A673 (cell line): ENCODE measurements at regions of chr7 and their contacts with region 1.

Region 1: GRCh38 chr7:155796381-155797261 is 15.6 kb downstream of the SHH start:
- DNase-seq: peak; percentile 46
- H3K4me3 ChIP-seq: no peak overlapping the region
- H3K27ac ChIP-seq: no peak overlapping the region
- H3K4me1 ChIP-seq: no peaks in the 10 kb centered on the region
- H3K27me3 ChIP-seq: peaks cover 36% of the 10 kb centered on the region
- CTCF ChIP-seq: peak; percentile 76

Region 2: GRCh38 chr7:155775691-155776090 is 20.9 kb before region 1 on chr7:
- CTCF ChIA-PET with region 1: no interaction called
- POLR2A ChIA-PET with region 1: no interaction called
- intact Hi-C with region 1: no loop called
- DNase-seq: no peak
- H3K4me3 ChIP-seq: no peak overlapping the region
- H3K27ac ChIP-seq: no peak overlapping the region
- H3K4me1 ChIP-seq: no peaks in the 10 kb centered on the region
- H3K27me3 ChIP-seq: no peaks in the 10 kb centered on the region
- CTCF ChIP-seq: no peak

Region 3: GRCh38 chr7:156827587-156828203 is 1031.1 kb after region 1 on chr7:
- CTCF ChIA-PET with region 1: no interaction called
- POLR2A ChIA-PET with region 1: no interaction called
- intact Hi-C with region 1: loop called (anchors 5 kb)
- DNase-seq: peak; percentile 18
- H3K4me3 ChIP-seq: no peak overlapping the region
- H3K27ac ChIP-seq: no peak overlapping the region
- H3K4me1 ChIP-seq: no peaks in the 10 kb centered on the region
- H3K27me3 ChIP-seq: no peaks in the 10 kb centered on the region
- CTCF ChIP-seq: peak; percentile 60; the same call in 1 of the 2 replicates